ENCODE measurements at regions of chr12 and their contacts with region 1.

Region 1: DNA sequence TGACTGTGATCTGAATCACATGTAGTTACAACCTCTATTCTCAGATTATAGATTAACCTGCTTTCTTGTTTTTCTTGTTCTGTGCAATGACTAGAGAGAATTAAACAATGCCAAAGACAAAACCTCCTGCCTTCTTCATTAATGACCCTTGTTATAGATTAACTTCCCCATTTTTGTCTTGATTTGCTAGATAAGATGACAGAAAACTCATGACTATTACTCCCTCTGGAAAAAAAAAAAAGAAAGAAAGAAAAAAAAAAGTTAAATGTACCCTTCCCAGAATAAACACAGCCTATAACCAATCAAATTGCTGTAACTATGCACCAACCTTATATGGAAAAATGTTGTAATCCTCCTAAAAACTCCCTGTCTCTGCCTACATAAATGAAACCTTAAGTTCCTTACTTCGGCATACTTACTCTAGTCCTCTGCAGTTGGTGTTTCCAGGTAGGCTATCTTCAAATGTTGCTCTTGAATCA is 41.1 kb upstream of the PCED1B start:
- DNase-seq: no peak
- ATAC-seq: no peak
- H3K4me3 ChIP-seq: no peak overlapping the region
- H3K27ac ChIP-seq: no peak overlapping the region
- H3K4me1 ChIP-seq: no peaks in the 10 kb centered on the region
- H3K27me3 ChIP-seq: peaks cover 0 to 5% (median 0%) of the 10 kb centered on the region in 7 donors
- CTCF ChIP-seq: no peak

Region 2: GRCh38 chr12:47397664-47398281 is 359.5 kb after region 1 on chr12:
- intact Hi-C with region 1: loop called in 9 of 10 experiments (anchors 5 to 10 kb)
- DNase-seq: no peak
- ATAC-seq: peak in 5 of 8 donors; percentile 43 to 80 (median 66)
- H3K4me3 ChIP-seq: no peak overlapping the region
- H3K27ac ChIP-seq: peak overlapping the region in 1 of 10 donors; percentile 16
- H3K4me1 ChIP-seq: peaks cover 0 to 22% (median 8%) of the 10 kb centered on the region in 9 donors
- H3K27me3 ChIP-seq: no peaks in the 10 kb centered on the region
- CTCF ChIP-seq: peak in 8 of 9 donors; percentile 29 to 60 (median 38)